ENCODE measurements at regions of chr22 and their contacts with region 1.

Region 1: GRCh38 chr22:32985899-32986765 is 72.0 kb downstream of the SYN3 start:
- DNase-seq: peak; percentile 70
- ATAC-seq: peak; percentile 99
- H3K4me3 ChIP-seq: no peak overlapping the region
- H3K27ac ChIP-seq: no peak overlapping the region
- H3K4me1 ChIP-seq: peaks cover 8% of the 10 kb centered on the region; the same call in 1 of the 2 replicates
- H3K27me3 ChIP-seq: no peaks in the 10 kb centered on the region
- CTCF ChIP-seq: peak; percentile 96
- EP300 ChIP-seq: no peak
- POLR2A ChIP-seq: no peak
- RAD21 ChIP-seq: peak; percentile 89

Region 2: DNA sequence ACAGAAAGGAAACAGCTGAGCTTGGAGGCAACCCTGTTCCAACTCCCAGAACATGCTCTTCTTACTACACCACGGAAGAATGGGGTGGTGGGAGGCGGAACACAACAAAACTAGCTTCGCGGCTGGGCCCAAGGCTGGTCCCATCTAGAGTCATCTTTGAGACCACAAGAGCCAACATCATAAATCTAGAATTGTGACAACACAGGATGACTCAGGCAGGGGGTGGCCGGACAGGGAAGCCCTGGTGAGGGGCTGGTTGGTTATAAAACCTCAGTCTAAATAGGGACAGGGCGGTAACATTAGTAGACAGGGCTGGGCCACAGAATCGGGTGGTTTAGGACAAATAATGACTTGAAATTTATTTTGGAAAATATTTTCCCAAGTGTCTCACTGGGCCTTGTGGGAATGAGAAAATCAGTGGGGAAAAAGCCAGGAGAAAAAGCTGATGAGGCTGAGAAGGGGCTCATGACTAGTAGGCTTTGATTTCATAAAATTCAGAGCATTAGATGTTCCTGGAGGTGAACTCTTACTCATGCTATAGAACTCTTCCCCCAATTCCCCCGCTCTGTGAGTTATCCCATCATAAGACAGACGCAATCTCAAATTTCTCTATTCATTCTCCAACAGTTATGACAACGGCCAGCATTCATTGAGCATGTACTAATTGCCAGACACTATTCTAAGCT is 336.5 kb before region 1 on chr22:
- CTCF ChIA-PET with region 1: no interaction called
- POLR2A ChIA-PET with region 1: no interaction called
- in situ Hi-C with region 1: loop called (anchors 10 kb)
- intact Hi-C with region 1: no loop called
- DNase-seq: no peak
- ATAC-seq: no peak
- H3K4me3 ChIP-seq: no peak overlapping the region
- H3K27ac ChIP-seq: no peak overlapping the region
- H3K4me1 ChIP-seq: peaks cover 29% of the 10 kb centered on the region
- H3K27me3 ChIP-seq: no peaks in the 10 kb centered on the region
- CTCF ChIP-seq: no peak
- EP300 ChIP-seq: no peak
- POLR2A ChIP-seq: no peak
- RAD21 ChIP-seq: no peak

Region 3: GRCh38 chr22:32836280-32837123 is 149.6 kb before region 1 on chr22:
- CTCF ChIA-PET with region 1: no interaction called
- POLR2A ChIA-PET with region 1: no interaction called
- in situ Hi-C with region 1: loop called (anchors 25 kb)
- intact Hi-C with region 1: no loop called
- DNase-seq: peak; percentile 11
- ATAC-seq: no peak
- H3K4me3 ChIP-seq: no peak overlapping the region
- H3K27ac ChIP-seq: no peak overlapping the region
- H3K4me1 ChIP-seq: no peaks in the 10 kb centered on the region
- H3K27me3 ChIP-seq: no peaks in the 10 kb centered on the region
- CTCF ChIP-seq: no peak; the same call in 1 of the 2 replicates
- EP300 ChIP-seq: no peak
- POLR2A ChIP-seq: no peak
- RAD21 ChIP-seq: no peak